ENCODE measurements at regions of chr4 and their contacts with region 1.

Region 1: DNA sequence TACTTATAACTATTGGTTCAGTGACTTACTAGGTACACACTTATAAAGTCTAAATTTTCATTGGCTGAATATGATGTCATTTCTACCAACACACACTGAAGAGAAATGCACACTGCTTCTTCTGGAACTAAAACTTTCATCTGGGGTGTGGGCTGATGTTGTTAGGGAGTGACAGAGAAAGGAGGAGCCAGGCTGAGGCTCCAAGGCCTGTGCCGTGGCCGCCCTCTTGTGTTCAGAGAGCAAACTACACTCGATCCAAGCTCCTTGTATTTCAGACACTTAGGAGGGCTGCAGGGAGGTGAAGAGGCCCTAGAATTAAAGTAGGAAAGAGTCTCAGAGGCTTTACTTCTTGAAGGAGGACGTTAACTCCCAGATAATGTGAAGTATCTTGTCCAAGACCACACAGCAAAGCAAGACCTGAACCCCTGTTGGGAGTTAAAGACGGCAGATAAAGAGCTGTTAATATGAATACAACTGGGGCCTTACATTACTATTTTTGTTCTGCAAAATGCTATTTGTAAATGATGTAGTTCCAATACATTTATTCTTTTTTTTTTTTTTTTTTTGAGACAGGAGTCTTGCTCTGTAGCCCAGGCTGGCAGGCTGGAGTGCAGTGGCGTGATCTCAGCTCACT is 137.5 kb downstream of the AFAP1 start:
- DNase-seq: no peak
- H3K4me3 ChIP-seq: no peak overlapping the region
- H3K27ac ChIP-seq: no peak overlapping the region
- H3K4me1 ChIP-seq: peaks cover 15% of the 10 kb centered on the region
- H3K27me3 ChIP-seq: no peaks in the 10 kb centered on the region
- CTCF ChIP-seq: peak; percentile 79 to 80 (median 80)
- POLR2A ChIP-seq: no peak

Region 2: DNA sequence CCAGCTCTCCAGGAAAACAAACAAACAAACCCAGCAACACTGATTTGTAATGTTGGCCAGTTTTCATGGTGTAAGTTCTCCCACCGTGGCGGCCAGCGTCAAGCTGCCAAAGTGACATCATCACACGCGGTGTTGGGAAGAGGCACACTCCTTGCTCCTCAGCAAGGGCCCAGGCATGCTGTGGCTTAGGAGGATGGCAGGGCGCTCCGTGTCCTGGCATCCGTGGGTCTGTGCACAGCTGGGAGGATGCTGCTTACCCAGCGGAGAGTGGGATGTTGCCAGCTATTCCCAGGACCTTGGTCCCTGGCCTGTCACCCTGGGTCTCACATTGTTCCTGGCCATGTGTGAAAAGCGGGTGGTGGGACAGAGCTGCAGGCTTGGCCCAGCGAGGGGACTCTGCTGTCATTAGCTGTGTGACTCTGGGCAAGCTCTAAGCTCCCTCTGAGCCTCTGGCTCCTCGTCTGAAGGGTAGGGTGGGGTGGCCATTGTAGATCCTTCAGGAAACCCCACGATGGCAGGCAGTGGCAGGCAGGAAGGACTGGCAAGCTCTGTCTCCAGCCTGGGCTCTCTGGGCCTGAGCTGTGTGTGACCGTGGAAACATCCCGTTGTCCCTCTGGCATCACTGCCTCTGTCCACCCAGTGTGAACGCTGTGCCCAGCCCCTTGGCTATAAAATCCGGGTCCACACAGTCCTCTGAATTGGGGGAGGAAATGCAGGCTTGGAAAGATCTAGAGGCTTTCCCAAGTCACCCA is 378.2 kb before region 1 on chr4:
- intact Hi-C with region 1: no loop called
- DNase-seq: no peak
- H3K4me3 ChIP-seq: no peak overlapping the region
- H3K27ac ChIP-seq: no peak overlapping the region
- H3K4me1 ChIP-seq: no peaks in the 10 kb centered on the region
- H3K27me3 ChIP-seq: no peaks in the 10 kb centered on the region
- CTCF ChIP-seq: no peak
- POLR2A ChIP-seq: no peak

Region 3: GRCh38 chr4:7725951-7726350 is 76.3 kb before region 1 on chr4:
- intact Hi-C with region 1: no loop called
- DNase-seq: no peak
- H3K4me3 ChIP-seq: no peak overlapping the region
- H3K27ac ChIP-seq: no peak overlapping the region
- H3K4me1 ChIP-seq: no peaks in the 10 kb centered on the region
- H3K27me3 ChIP-seq: no peaks in the 10 kb centered on the region
- CTCF ChIP-seq: no peak
- POLR2A ChIP-seq: no peak

Region 4: DNA sequence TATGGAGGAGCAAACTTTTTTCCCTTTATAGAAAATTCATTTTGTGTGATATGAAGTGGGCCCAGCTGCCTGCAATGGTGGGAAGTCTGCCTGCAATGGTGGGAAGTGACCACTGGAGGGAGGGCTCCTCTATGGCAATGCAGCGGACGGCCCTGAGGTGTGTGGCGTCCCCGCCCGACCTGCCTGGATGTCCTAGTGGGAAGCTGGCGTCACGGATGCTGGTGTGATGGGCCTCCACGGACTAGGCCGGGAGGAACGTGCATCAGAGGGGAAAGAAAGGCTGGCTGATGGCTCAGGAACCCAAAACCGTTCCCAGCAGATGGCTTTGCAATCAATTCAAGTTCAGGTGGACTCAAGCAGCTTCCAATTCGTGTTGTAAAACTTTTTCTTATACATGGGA is 40.5 kb before region 1 on chr4:
- intact Hi-C with region 1: loop called (anchors 5 kb)
- DNase-seq: no peak
- H3K4me3 ChIP-seq: no peak overlapping the region
- H3K27ac ChIP-seq: no peak overlapping the region
- H3K4me1 ChIP-seq: peaks cover 18% of the 10 kb centered on the region
- H3K27me3 ChIP-seq: no peaks in the 10 kb centered on the region
- CTCF ChIP-seq: peak in 2 of 3 experiments; percentile 19 to 45
- POLR2A ChIP-seq: no peak

Region 5: GRCh38 chr4:7843831-7844593 is 41.8 kb after region 1 on chr4:
- intact Hi-C with region 1: loop called (anchors 5 kb)
- DNase-seq: no peak
- H3K4me3 ChIP-seq: no peak overlapping the region
- H3K27ac ChIP-seq: peak overlapping the region; percentile 92
- H3K4me1 ChIP-seq: peaks cover 24% of the 10 kb centered on the region
- H3K27me3 ChIP-seq: no peaks in the 10 kb centered on the region
- CTCF ChIP-seq: peak in 2 of 3 experiments; percentile 11 to 44
- POLR2A ChIP-seq: no peak

Region 6: GRCh38 chr4:7939377-7940108 is 137.3 kb after region 1 on chr4 and contains the start of gene AFAP1:
- intact Hi-C with region 1: loop called (anchors 10 kb)
- DNase-seq: no peak
- H3K4me3 ChIP-seq: peak within 1 kb of the TSS; percentile 65 to 85
- H3K27ac ChIP-seq: peak within 1 kb of the TSS; percentile 89
- H3K4me1 ChIP-seq: peaks cover 13% of the 10 kb centered on the region
- H3K27me3 ChIP-seq: no peaks in the 10 kb centered on the region
- CTCF ChIP-seq: no peak
- POLR2A ChIP-seq: peak in 1 of 2 donors; percentile 76
- total RNA-seq, gene AFAP1: 20.4 TPM

Region 7: DNA sequence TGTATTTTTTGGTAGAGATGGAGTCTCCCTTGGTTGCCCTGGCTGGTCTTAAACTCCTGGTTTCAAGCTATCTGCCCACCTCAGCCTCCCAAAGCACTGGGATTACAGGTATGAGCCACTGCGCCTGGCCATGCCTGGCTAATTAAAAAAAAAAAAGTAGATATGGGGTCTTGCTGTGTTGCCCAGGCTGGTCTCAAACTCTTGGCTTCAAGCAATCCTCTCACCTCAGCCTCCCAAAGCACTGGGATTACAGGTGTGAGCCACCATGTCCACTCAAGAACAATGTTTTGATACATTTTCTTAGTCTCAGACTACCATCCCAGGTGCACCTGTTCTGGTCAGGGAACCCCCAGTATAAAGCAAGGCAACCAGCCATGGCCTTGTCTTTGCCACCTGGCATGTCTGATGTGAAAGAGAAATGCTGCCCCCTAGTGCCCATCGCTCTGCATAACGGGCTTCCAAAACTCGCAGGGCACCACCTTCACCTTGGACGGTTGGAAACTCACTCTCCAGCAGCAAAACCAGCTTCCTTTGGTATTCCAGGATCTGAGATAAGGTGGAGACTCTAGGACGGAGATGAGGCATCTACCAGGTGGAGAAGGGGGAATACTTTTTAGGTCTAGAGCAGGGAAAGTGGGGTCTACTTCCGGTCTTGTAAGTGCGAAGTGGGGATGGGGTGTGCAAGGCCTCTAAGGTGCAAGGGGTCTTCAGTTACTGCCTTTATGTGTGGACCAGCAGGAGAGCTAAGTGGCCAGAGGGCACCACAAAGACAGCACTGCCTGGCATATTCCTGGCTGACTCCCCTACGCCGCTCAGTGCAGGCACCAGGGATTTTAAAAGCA is 185.2 kb after region 1 on chr4:
- intact Hi-C with region 1: loop called (anchors 5 kb)
- DNase-seq: no peak
- H3K4me3 ChIP-seq: no peak overlapping the region
- H3K27ac ChIP-seq: no peak overlapping the region
- H3K4me1 ChIP-seq: peaks cover 9% of the 10 kb centered on the region
- H3K27me3 ChIP-seq: no peaks in the 10 kb centered on the region
- CTCF ChIP-seq: peak; percentile 44 to 70 (median 59)
- POLR2A ChIP-seq: no peak

Region 8: GRCh38 chr4:8182858-8183725 is 380.9 kb after region 1 on chr4:
- intact Hi-C with region 1: no loop called
- DNase-seq: no peak
- H3K4me3 ChIP-seq: no peak overlapping the region
- H3K27ac ChIP-seq: peak overlapping the region; percentile 68
- H3K4me1 ChIP-seq: peaks cover 45% of the 10 kb centered on the region
- H3K27me3 ChIP-seq: no peaks in the 10 kb centered on the region
- CTCF ChIP-seq: no peak
- POLR2A ChIP-seq: no peak